ENCODE measurements at regions of chr6 and their contacts with region 1.

Region 1: DNA sequence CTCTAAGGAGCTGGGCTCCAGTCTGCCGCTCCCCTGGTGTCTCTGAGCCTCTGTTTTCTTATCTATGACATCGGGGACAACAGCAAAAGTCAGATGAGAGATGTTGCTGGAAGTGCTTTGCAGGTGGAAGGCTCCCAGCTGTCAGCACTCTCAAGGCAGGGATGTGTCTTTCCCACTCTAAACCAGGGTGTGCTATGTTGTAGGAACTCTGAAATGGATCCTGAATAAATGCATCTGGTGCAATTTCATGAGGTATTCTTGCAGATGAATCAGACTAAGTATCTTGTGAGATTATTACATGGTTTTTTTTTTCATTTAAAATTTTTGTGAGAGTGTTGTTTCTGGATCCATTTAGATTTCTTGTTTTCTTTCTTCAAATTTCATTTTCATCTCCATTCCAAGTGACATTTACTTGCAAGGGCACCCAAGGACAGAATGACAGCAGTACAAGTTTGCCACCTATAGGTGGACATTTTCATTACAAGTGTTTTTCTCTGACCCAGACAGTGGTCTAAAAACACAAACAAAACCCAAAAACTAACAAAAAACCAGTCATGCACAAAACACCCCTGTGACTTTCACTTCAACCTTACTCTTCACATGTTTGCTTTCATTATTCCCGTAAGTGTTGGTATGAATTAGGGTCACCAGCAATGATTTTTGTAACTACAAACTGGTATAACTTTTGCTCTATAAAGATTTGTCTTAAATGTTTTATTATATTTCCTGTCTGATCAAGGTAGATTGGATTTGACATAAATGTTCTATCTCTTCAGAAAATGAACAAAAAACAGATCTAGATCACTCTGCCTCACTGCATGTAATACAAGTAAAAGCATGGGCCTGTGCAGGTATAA is 14.7 kb upstream of the SIM1 start:
- DNase-seq: peak; percentile 67

Region 2: GRCh38 chr6:100116411-100117194 is 362.8 kb before region 1 on chr6:
- in situ Hi-C with region 1: loop called (anchors 25 kb)
- DNase-seq: peak; percentile 66

Region 3: GRCh38 chr6:100415780-100416179 is 63.6 kb before region 1 on chr6:
- in situ Hi-C with region 1: no loop called
- DNase-seq: no peak